ENCODE measurements at regions of chr15 and their contacts with region 1.

Region 1: GRCh38 chr15:50134520-50135024 is 15.5 kb upstream of the ATP8B4 start:
- DNase-seq: no peak
- H3K4me3 Mint-ChIP-seq: no peak overlapping the region
- H3K27ac Mint-ChIP-seq: peak overlapping the region; percentile 84
- H3K4me1 Mint-ChIP-seq: peaks cover 52% of the 10 kb centered on the region
- H3K27me3 Mint-ChIP-seq: peaks cover 14% of the 10 kb centered on the region

Region 2: DNA sequence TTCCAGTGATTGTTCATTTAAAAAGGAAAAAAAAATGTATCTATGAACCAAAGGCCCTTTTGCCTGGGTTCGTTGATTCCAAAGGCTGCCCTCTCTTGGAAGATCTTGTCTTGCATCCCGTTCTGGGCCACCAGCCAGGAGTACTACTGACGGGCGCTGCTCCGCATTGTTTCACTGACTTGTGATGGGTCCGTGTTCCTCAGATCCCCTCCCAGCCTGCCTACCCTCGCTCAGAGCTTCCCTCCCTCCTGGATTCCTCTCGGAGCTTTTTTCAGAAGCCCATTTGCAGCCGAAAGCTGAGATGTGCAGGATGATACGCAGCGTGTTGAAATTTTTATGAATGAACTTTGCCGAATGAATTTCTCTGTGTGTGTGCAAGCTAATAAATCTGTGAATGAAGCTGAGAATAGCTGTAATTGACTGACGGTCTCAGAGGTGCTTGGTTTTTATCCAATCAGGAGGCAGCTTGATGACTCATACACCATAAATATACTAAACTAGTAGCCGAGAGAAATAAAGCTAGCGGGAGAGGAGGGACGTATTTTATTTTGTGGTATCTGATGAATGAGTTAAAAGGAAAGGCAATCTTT is 1171.0 kb before region 1 on chr15 and contains the start of gene SHC4:
- CTCF ChIA-PET with region 1: no interaction called
- POLR2A ChIA-PET with region 1: no interaction called
- intact Hi-C with region 1: loop called (anchors 2 kb)
- DNase-seq: no peak
- H3K4me3 Mint-ChIP-seq: peak within 1 kb of the TSS; percentile 61
- H3K27ac Mint-ChIP-seq: no peak within 1 kb of the TSS
- H3K4me1 Mint-ChIP-seq: peaks cover 32% of the 10 kb centered on the region
- H3K27me3 Mint-ChIP-seq: peaks cover 25% of the 10 kb centered on the region
- total RNA-seq, gene SHC4: 1.9 to 2.6 TPM

Region 3: DNA sequence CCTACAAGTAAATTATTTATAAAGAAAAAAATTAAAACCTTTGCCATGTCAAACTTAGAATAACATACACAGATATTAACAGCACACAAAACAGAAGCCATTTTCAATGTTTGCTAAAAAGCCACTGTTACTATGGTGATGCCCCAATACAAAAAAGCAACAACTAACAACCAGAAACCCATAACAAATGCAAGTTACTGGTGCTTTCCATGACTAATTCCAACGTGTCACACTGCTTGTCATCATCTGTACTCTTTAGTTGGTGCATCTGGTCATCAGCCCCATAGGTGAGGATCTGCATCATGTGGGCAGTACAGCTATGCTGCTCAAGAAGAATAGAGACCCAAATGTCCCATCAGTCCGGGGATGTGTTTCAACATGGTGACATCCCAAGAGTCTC is 68.4 kb before region 1 on chr15:
- CTCF ChIA-PET with region 1: no interaction called
- POLR2A ChIA-PET with region 1: interaction called, 3 read pairs
- intact Hi-C with region 1: loop called (anchors 1 kb)
- DNase-seq: peak; percentile 22
- H3K4me3 Mint-ChIP-seq: no peak overlapping the region
- H3K27ac Mint-ChIP-seq: no peak overlapping the region
- H3K4me1 Mint-ChIP-seq: peaks cover 8% of the 10 kb centered on the region
- H3K27me3 Mint-ChIP-seq: peaks cover 10% of the 10 kb centered on the region

Region 4: GRCh38 chr15:50145451-50145872 is 10.9 kb after region 1 on chr15:
- CTCF ChIA-PET with region 1: interaction called, 11 read pairs
- POLR2A ChIA-PET with region 1: no interaction called
- intact Hi-C with region 1: no loop called
- DNase-seq: no peak
- H3K4me3 Mint-ChIP-seq: no peak overlapping the region
- H3K27ac Mint-ChIP-seq: no peak overlapping the region
- H3K4me1 Mint-ChIP-seq: peaks cover 17% of the 10 kb centered on the region
- H3K27me3 Mint-ChIP-seq: no peaks in the 10 kb centered on the region

Region 5: GRCh38 chr15:50247819-50248655 is 113.5 kb after region 1 on chr15:
- CTCF ChIA-PET with region 1: no interaction called
- POLR2A ChIA-PET with region 1: no interaction called
- intact Hi-C with region 1: loop called (anchors 2 kb)
- DNase-seq: peak; percentile 82
- H3K4me3 Mint-ChIP-seq: peak overlapping the region; percentile 75
- H3K27ac Mint-ChIP-seq: peak overlapping the region; percentile 97
- H3K4me1 Mint-ChIP-seq: peaks cover 35% of the 10 kb centered on the region
- H3K27me3 Mint-ChIP-seq: no peaks in the 10 kb centered on the region

Region 6: GRCh38 chr15:50424066-50424890 is 289.7 kb after region 1 on chr15 and contains the start of gene USP8:
- CTCF ChIA-PET with region 1: no interaction called
- POLR2A ChIA-PET with region 1: no interaction called
- intact Hi-C with region 1: no loop called
- DNase-seq: peak; percentile 96
- H3K4me3 Mint-ChIP-seq: peak within 1 kb of the TSS; percentile 94
- H3K27ac Mint-ChIP-seq: peak within 1 kb of the TSS; percentile 82
- H3K4me1 Mint-ChIP-seq: peaks cover 29% of the 10 kb centered on the region
- H3K27me3 Mint-ChIP-seq: no peaks in the 10 kb centered on the region
- total RNA-seq, gene USP8: 43.4 to 46.0 TPM

Region 7: DNA sequence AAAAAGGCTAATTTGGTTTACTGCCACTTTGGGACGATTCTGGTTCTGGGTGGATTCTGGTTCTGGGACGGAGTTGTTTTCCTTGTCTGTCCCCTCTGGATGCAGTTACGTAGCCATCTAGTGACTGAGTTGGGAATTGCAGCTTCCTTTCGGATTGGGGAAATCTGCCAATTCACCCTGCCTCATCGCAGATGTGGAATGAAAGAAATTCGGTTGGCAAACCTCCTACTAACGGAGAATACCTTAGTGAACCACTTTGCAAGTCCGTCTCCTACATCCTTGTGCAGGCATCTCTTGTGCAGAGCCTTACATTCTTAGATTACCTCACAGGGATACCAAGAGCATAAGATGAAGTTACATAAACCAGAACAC is 742.4 kb after region 1 on chr15:
- CTCF ChIA-PET with region 1: no interaction called
- POLR2A ChIA-PET with region 1: no interaction called
- intact Hi-C with region 1: loop called (anchors 5 kb)
- DNase-seq: peak; percentile 70
- H3K4me3 Mint-ChIP-seq: peak overlapping the region; percentile 71
- H3K27ac Mint-ChIP-seq: peak overlapping the region; percentile 14
- H3K4me1 Mint-ChIP-seq: peaks cover 48% of the 10 kb centered on the region
- H3K27me3 Mint-ChIP-seq: peaks cover 3% of the 10 kb centered on the region